Adrenal gland (tissue), 19 donors: ENCODE measurements at regions of chr22 and their contacts with region 1.

Region 1: DNA sequence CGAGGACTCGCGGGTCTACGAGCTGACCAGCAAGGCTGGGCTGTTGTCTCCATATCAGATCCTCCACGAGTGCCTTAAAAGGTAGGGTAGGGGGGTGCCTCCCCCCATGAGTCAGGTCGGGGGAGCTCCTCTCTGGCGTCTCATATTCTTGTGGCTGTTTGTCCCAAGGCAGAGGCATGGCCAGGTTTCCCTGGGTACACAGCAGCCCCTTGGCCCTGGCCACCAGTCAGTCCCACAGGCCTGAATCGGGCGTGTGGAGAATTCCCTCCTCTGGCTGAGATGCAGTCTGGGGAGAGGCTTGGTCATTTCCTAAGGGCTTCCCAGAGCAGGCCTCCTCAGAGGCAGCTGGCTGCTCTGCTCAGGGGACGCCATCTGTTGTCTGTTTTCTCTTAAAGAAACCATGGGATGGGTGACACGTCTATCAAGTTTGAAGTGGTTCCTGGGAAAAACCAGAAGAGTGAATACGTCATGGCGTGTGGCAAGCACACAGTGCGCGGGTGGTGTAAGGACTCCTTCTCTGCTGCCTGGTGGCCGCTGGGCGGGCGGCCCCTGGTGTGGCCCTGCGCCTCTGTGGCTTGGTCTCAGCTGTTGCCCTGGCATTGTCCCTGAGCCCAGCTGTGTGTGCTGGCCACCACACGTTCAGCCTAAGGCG is 9.6 kb upstream of the RANBP1 start:
- DNase-seq: no peak
- H3K4me3 ChIP-seq: no peak overlapping the region
- H3K27ac ChIP-seq: no peak overlapping the region
- H3K4me1 ChIP-seq: no peaks in the 10 kb centered on the region
- H3K27me3 ChIP-seq: no peaks in the 10 kb centered on the region
- CTCF ChIP-seq: no peak
- POLR2A ChIP-seq: no peak

Region 2: GRCh38 chr22:20069331-20070042 is 36.8 kb before region 1 on chr22:
- intact Hi-C with region 1: loop called in 1 of 2 experiments (anchors 2 kb)
- DNase-seq: no peak
- H3K4me3 ChIP-seq: no peak overlapping the region
- H3K27ac ChIP-seq: no peak overlapping the region
- H3K4me1 ChIP-seq: no peaks in the 10 kb centered on the region
- H3K27me3 ChIP-seq: no peaks in the 10 kb centered on the region
- CTCF ChIP-seq: no peak
- POLR2A ChIP-seq: no peak